Colonic mucosa (tissue), 4 donors: ENCODE measurements at regions of chr22 and their contacts with region 1.

Region 1: GRCh38 chr22:30089655-30089974 is 9.4 kb downstream of the HORMAD2 start:
- DNase-seq: no peak
- H3K4me3 ChIP-seq: no peak overlapping the region
- H3K27ac ChIP-seq: no peak overlapping the region
- H3K4me1 ChIP-seq: peaks cover 4% of the 10 kb centered on the region
- H3K27me3 ChIP-seq: no peaks in the 10 kb centered on the region
- CTCF ChIP-seq: no peak

Region 2: DNA sequence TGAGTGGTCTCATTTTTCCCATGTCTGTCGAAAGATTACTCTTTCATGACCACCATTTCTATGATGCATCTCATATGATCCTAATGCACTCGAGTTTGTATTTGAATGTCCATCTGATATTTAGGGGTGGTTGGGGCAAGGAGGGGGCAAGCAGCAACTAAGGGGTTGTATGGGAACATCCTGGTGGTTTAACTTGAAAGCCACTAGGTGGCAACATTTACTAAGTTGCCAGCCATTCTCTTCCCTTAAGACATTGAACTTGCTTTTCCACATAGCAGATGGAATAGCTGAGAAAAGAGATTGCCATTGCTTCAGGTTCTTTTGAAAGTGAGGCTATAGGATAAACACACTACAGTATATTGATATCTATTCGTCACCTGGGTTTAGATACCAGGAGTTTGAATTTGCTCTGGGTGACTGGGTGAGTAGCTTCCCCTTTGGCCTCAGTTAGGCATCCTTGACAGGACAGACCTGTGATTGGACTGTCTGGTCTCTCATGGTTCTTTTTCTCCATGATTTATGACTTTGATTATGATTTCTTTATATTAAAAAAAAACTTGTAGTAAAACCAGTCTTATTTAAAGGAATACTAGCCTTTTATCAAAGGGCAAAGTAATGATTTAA is 453.8 kb before region 1 on chr22:
- intact Hi-C with region 1: loop called (anchors 5 kb)
- DNase-seq: no peak
- H3K4me3 ChIP-seq: no peak overlapping the region
- H3K27ac ChIP-seq: no peak overlapping the region
- H3K4me1 ChIP-seq: no peaks in the 10 kb centered on the region
- H3K27me3 ChIP-seq: no peaks in the 10 kb centered on the region
- CTCF ChIP-seq: peak; percentile 48